ENCODE measurements at regions of chr2 and their contacts with region 1.

Region 1: GRCh38 chr2:127174136-127174535 is 46.0 kb downstream of the CYP27C1 start:
- DNase-seq: no peak
- H3K4me3 ChIP-seq: no peak overlapping the region
- H3K27ac ChIP-seq: no peak overlapping the region
- H3K4me1 ChIP-seq: peaks cover 0 to 4% (median 3%) of the 10 kb centered on the region in 4 experiments; a peak in 4 of 7 replicates
- H3K27me3 ChIP-seq: no peaks in the 10 kb centered on the region; a peak in 1 of 7 replicates
- CTCF ChIP-seq: peak; percentile 34 to 68 (median 54)
- EP300 ChIP-seq: no peak
- POLR2A ChIP-seq: no peak
- RAD21 ChIP-seq: peak; percentile 62 to 71

Region 2: DNA sequence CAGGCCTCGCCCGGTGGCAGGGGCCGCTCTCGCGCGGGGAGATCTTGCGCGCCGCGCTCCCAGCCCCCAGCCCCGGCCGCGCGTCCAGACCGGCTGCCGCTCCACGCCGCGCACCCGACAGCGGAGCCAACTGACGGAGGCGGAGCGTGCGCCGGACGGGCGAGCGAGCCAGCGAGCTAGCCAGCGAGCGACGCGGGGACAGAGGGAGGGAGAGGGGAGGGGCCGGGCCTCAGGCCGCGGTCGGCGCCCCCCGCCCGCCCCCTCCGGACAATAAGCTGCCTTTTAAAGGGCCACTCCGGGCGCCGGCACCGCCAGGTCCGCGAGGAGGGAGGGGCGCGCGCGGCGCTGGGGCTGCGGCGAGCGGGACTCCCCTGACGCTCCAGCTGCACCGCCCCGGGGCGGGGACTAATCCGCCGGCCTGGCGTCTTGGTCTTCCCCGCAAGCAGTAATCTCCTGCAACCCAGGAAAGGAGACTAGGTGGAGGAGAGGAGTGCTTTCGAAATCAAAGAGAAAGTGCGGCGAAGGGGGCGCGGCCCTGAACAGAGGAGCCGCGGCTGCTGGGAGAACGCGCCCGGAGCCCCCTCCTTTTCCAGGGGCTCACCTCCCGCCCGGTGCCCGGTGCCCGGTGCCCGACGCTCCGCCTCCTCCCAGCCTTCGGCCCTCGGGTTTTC is 67.0 kb before region 1 on chr2 and contains the start of gene BIN1:
- CTCF ChIA-PET with region 1: interaction called, 11 read pairs
- POLR2A ChIA-PET with region 1: no interaction called
- DNase-seq: peak; percentile 70 to 90
- H3K4me3 ChIP-seq: peak within 1 kb of the TSS; percentile 65 to 85 (median 72)
- H3K27ac ChIP-seq: no peak within 1 kb of the TSS
- H3K4me1 ChIP-seq: peaks cover 6 to 21% (median 13%) of the 10 kb centered on the region in 4 experiments
- H3K27me3 ChIP-seq: peaks cover 0 to 7% (median 0%) of the 10 kb centered on the region in 4 experiments; a peak in 1 of 7 replicates
- CTCF ChIP-seq: no peak
- EP300 ChIP-seq: no peak
- POLR2A ChIP-seq: peak in 1 of 2 experiments; percentile 36; a peak in 2 of 3 replicates
- RAD21 ChIP-seq: no peak
- total RNA-seq, gene BIN1: 35.6 and 41.9 TPM in 2 replicates

Region 3: GRCh38 chr2:127145280-127145895 is 28.7 kb before region 1 on chr2:
- CTCF ChIA-PET with region 1: interaction called, 12 read pairs
- POLR2A ChIA-PET with region 1: no interaction called
- DNase-seq: peak in 1 of 2 experiments; percentile 27
- H3K4me3 ChIP-seq: no peak overlapping the region
- H3K27ac ChIP-seq: no peak overlapping the region
- H3K4me1 ChIP-seq: 0 out of 7 replicates have a peak, but pooled peaks cover 0 to 1% (median 0%) of the 10 kb centered on the region in 4 experiments
- H3K27me3 ChIP-seq: 0 out of 7 replicates have a peak, but pooled peaks cover 0 to 2% (median 0%) of the 10 kb centered on the region in 4 experiments
- CTCF ChIP-seq: no peak
- EP300 ChIP-seq: no peak
- POLR2A ChIP-seq: no peak
- RAD21 ChIP-seq: no peak

Region 4: DNA sequence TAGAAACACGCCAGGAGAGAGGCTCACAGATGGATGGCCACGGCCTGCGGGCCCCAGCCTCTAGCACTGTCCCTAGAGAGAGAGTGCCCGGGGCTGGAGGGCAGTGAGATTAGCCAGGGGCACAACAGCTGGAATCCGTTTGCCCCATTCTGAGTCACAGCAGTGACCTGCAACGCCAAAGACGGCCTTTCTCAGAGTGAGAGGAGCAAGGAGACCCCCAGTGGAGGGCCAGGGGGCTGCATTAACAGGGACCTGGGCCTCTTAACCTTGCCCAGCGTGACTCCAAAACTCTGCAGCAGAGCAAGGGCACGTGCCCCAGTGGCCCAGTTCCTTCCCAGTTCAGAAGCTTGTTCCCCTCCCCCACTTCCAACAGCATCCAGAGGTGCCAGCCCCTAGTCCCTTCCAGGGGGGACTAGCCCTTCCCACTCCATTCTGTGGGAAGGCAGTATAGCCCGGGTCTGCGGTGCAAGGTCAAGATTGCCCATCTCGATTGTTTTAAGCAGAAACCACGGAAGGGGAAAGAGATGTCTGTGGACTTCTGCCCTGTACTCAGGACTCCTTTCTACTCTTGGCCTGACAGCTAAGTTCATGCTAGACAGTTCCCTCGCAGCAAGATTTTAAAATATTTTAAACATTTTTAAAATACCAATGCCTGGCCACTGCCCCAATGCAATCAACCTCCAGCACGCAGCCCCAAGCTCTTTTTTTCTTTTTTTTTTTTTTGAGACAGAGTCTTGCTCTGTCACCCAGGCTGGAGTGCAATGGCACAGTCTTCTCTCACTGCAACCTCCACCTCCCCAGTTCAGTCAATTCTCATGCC is 16.3 kb before region 1 on chr2:
- CTCF ChIA-PET with region 1: interaction called, 11 read pairs
- POLR2A ChIA-PET with region 1: interaction called, 3 read pairs
- DNase-seq: peak; percentile 57 to 81
- H3K4me3 ChIP-seq: no peak overlapping the region
- H3K27ac ChIP-seq: no peak overlapping the region
- H3K4me1 ChIP-seq: peaks cover 0 to 8% (median 5%) of the 10 kb centered on the region in 4 experiments; a peak in 4 of 7 replicates
- H3K27me3 ChIP-seq: no peaks in the 10 kb centered on the region
- CTCF ChIP-seq: peak; percentile 76 to 86 (median 78)
- EP300 ChIP-seq: no peak
- POLR2A ChIP-seq: no peak
- RAD21 ChIP-seq: peak; percentile 73 to 84

Region 5: DNA sequence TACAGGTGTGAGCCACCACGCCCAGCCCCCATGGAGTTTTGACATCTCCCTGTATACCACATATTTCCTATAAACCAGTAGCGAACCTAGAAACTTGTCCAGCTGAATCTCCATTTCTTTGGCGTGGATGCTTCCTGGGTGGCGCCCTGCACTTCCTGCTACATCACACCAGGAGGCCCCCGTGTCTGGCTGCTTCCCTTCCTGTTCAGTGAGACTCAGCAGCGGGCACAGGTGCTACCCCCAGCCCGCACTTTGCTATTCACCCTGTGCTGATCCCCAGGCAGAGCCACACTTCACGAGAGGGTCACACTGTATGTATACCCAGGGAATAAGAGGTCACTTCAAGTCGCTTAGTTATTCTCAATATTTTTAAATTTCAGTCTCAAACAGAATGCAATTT is 11.0 kb after region 1 on chr2:
- CTCF ChIA-PET with region 1: interaction called, 18 read pairs
- POLR2A ChIA-PET with region 1: no interaction called
- DNase-seq: no peak
- H3K4me3 ChIP-seq: no peak overlapping the region
- H3K27ac ChIP-seq: no peak overlapping the region
- H3K4me1 ChIP-seq: peaks cover 0 to 20% (median 10%) of the 10 kb centered on the region in 4 experiments; a peak in 4 of 7 replicates
- H3K27me3 ChIP-seq: no peaks in the 10 kb centered on the region
- CTCF ChIP-seq: no peak
- EP300 ChIP-seq: no peak
- POLR2A ChIP-seq: no peak
- RAD21 ChIP-seq: no peak

Region 6: DNA sequence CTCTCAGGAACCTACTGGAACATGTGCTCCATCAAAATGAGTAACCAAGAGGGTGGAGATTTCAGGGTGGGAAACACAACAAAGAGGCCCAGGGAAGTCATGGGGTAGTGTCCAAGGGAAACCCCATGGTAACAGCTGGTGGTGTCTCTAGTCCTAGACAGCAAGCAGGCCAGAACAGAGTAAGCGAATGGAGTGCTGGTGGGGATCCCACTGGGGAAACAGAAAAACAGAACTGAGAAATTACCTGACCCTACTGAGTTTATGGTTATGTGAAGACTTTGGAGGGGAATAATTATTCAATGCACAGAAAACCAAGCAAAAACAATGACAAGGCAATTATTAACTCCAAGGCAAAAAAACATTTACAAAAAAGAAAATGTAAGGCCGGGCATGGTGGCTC is 102.9 kb after region 1 on chr2:
- CTCF ChIA-PET with region 1: no interaction called
- POLR2A ChIA-PET with region 1: no interaction called
- DNase-seq: no peak
- H3K4me3 ChIP-seq: no peak overlapping the region
- H3K27ac ChIP-seq: no peak overlapping the region
- H3K4me1 ChIP-seq: no peaks in the 10 kb centered on the region
- H3K27me3 ChIP-seq: no peaks in the 10 kb centered on the region
- CTCF ChIP-seq: no peak
- EP300 ChIP-seq: no peak
- POLR2A ChIP-seq: no peak
- RAD21 ChIP-seq: no peak

Measured in H1 (cell line).